MCF 10A (cell line): ENCODE measurements at regions of chr16 and their contacts with region 1.

Region 1: GRCh38 chr16:695355-696089 is 5.3 kb upstream of the WDR24 start:
- DNase-seq: peak; percentile 87
- H3K4me3 Mint-ChIP-seq: peak overlapping the region; percentile 41
- H3K27ac Mint-ChIP-seq: no peak overlapping the region
- H3K4me1 Mint-ChIP-seq: peaks cover 10% of the 10 kb centered on the region
- H3K27me3 Mint-ChIP-seq: no peaks in the 10 kb centered on the region
- CTCF ChIP-seq: no peak

Region 2: GRCh38 chr16:600781-601180 is 94.7 kb before region 1 on chr16:
- CTCF ChIA-PET with region 1: no interaction called
- POLR2A ChIA-PET with region 1: no interaction called
- intact Hi-C with region 1: no loop called
- DNase-seq: no peak
- H3K4me3 Mint-ChIP-seq: no peak overlapping the region
- H3K27ac Mint-ChIP-seq: no peak overlapping the region
- H3K4me1 Mint-ChIP-seq: peaks cover 13% of the 10 kb centered on the region
- H3K27me3 Mint-ChIP-seq: no peaks in the 10 kb centered on the region
- CTCF ChIP-seq: no peak

Region 3: DNA sequence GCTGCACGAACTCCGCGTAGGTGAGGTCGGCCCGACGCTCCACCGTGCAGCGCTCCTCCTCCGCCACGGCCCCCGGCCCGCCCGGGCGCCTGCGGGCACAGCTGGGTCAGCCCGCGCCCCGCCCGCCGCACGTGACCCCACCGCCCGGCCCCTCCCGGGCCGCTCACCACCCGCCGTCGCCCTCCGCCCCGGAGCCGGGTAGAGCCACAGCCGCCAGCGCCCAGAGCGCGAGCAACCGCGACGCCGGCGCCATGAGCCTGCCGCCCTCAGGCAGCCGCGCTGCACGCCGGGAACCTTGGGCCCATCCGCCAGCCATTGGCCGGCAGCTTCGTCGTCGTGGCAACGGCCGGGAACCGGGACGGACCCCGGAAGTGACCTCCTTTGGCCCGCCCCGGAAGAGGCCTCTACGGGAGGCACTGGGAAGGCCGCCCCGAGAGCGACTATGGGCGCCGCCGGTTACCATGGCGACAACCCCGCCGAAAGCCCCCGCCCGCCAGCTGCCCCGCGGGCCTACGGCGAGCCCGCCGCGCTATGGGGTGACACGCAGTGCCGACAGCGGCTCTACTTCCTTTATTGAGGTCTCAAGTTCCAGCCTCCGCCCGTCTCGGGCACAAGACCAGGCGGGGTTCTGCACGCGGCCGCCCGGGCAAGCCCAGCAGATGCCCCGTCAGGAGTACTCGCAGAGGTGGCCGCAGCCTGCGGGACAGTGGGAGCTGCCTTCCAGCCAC is 11.3 kb before region 1 on chr16 and contains the start of gene JMJD8:
- CTCF ChIA-PET with region 1: interaction called, 4 read pairs
- POLR2A ChIA-PET with region 1: interaction called, 32 read pairs
- intact Hi-C with region 1: no loop called
- DNase-seq: peak; percentile 95
- H3K4me3 Mint-ChIP-seq: peak within 1 kb of the TSS; percentile 76
- H3K27ac Mint-ChIP-seq: peak within 1 kb of the TSS; percentile 61
- H3K4me1 Mint-ChIP-seq: peaks cover 6% of the 10 kb centered on the region
- H3K27me3 Mint-ChIP-seq: no peaks in the 10 kb centered on the region
- CTCF ChIP-seq: no peak
- total RNA-seq, gene JMJD8: 23.6 and 33.4 TPM in 2 replicates

Region 4: DNA sequence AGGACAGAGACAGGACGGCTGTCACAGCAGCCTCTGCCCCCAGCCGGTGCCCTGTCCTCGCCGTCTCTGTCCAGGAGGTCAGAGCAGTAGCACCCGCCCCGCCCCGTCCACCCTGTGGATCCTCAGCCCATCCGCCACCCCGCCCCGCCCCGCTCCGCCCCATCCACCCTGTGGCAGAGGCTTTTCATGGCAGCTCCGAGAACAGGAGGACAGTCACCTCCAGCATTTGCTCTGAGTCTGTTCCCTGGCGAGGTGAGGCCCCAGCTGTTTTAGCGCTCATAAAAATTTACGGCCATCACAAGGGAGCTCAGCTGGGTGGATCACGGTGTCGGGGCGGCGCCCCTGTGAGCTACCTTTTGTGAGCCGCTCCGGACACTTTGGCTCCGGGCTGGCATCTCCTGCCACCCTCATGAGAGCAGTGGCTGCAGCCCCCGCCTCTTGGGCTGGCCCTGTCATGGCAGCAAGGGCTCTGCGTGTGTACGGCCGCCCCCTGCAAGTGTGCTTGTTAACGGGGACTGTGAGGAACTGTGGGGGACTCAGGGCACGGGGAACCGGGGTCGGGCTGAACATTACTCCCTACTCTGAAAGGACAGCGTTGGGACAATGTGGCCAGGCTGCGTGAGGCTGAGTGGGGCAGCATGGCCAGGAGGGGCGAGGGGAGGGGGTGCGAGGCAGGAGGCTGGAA is 137.3 kb after region 1 on chr16:
- CTCF ChIA-PET with region 1: no interaction called
- POLR2A ChIA-PET with region 1: no interaction called
- intact Hi-C with region 1: no loop called
- DNase-seq: no peak
- H3K4me3 Mint-ChIP-seq: no peak overlapping the region
- H3K27ac Mint-ChIP-seq: no peak overlapping the region
- H3K4me1 Mint-ChIP-seq: no peaks in the 10 kb centered on the region
- H3K27me3 Mint-ChIP-seq: peaks cover 10% of the 10 kb centered on the region
- CTCF ChIP-seq: no peak